ENCODE measurements at regions of chr15 and their contacts with region 1.

Region 1: GRCh38 chr15:39555885-39556284 is 25.0 kb upstream of the THBS1 start:
- DNase-seq: peak; percentile 20
- ATAC-seq: peak; percentile 39
- H3K4me3 ChIP-seq: no peak overlapping the region
- H3K27ac ChIP-seq: peak overlapping the region; percentile 98; the same call in 1 of the 2 replicates
- H3K4me1 ChIP-seq: peaks cover 26% of the 10 kb centered on the region
- H3K27me3 ChIP-seq: no peaks in the 10 kb centered on the region
- CTCF ChIP-seq: no peak
- POLR2A ChIP-seq: no peak
- RAD21 ChIP-seq: no peak

Region 2: DNA sequence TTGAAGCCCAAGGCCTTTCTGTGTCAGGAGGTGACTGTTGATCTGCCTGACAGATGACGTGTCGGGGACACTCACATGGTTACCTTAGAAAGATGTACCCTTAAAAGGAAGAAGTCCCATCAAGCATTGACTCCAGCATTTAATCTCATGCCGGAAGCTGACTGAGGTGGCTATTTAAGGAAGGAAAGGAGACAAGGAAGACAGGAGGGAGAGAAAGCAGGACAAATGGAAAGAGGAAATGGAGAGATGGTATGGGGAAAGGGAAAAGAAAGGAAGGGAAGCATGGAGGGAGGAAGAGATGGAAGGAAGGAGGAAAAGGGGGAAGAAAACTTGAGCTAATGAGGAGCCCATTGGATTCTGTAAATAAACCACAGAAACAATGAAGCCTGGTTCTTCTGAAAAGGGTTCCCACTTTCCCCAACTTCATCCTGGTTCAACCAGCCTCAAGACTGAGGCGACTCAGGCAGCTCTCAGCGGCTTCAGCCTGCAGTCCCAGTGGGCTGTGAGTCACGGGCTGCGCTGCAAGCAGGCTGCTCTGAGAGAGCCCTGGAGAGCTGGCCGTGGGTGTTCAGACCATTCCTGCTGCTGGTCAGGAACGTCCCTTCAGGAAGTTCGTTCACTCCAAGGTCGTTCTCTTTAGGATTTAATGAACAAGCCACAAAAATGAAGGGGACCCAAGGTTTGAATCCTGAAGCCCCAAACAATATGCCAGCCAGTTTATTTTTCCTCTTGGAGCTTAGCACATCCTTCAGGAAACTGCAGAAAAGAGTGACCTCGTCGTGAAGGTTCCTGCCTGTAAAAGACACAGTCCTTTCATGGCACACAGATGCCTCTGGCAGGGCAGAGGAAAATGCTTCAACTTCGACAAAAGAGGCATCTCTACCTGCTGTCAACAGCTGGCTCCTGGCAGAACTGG is 44.6 kb before region 1 on chr15:
- CTCF ChIA-PET with region 1: no interaction called
- POLR2A ChIA-PET with region 1: no interaction called
- dilution Hi-C with region 1: no loop called
- in situ Hi-C with region 1: no loop called
- intact Hi-C with region 1: loop called (anchors 5 kb)
- DNase-seq: peak; percentile 93
- ATAC-seq: peak; percentile 97
- H3K4me3 ChIP-seq: no peak overlapping the region; the same call in 1 of the 2 replicates
- H3K27ac ChIP-seq: peak overlapping the region; percentile 70
- H3K4me1 ChIP-seq: peaks cover 18% of the 10 kb centered on the region
- H3K27me3 ChIP-seq: no peaks in the 10 kb centered on the region
- CTCF ChIP-seq: no peak
- POLR2A ChIP-seq: peak; percentile 33; the same call in 1 of the 2 replicates
- RAD21 ChIP-seq: peak; percentile 37

Measured in IMR-90 (cell line).